GM12878 (cell line): ENCODE measurements at regions of chr18 and their contacts with region 1.

Region 1: DNA sequence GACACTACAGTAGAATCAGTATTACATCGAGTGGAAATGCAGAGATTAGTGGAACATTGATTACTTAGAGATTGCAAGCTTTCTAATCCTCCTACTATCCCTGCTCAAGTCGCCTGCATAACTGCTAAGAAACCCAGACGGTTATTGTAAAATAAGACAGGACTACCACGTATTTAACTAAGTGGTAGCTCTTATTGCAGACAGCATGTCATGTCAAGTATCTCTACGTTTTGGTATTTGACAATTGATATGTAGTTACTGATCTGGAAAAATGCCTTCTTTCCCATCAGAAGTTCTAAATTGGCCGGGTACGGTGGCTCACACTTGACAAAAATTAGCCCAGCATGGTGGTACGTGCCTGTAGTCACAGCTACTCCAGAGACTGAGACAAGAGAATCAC is 404.1 kb downstream of the CBLN2 start:
- DNase-seq: no peak
- ATAC-seq: no peak
- H3K4me3 ChIP-seq: no peak overlapping the region
- H3K27ac ChIP-seq: no peak overlapping the region
- H3K4me1 ChIP-seq: no peaks in the 10 kb centered on the region
- H3K27me3 ChIP-seq: no peaks in the 10 kb centered on the region
- CTCF ChIP-seq: no peak
- EP300 ChIP-seq: no peak
- POLR2A ChIP-seq: no peak
- RAD21 ChIP-seq: no peak

Region 2: DNA sequence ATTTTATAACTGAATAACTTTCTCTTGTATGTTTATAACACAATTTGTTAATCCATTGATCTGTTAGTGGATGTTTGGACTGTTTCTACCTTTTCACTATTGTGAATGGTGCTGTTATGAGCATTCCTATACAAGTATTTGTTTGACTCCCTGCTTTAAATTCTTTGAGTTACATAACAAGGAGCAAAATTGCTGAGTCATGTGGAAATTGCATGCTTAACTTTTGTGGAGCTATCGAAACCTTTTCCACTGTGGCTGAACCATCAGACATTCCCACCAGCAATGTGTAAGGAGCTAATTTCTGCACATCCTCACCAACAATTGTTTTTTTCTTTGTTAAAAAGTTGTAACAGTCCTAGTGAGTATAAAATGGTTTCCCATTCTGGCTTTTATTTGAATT is 11.4 kb before region 1 on chr18:
- CTCF ChIA-PET with region 1: no interaction called
- POLR2A ChIA-PET with region 1: no interaction called
- RAD21 ChIA-PET with region 1: no interaction called
- SMC1A ChIA-PET with region 1: interaction called, 11 read pairs
- in situ Hi-C with region 1: no loop called
- intact Hi-C with region 1: no loop called
- DNase-seq: no peak
- ATAC-seq: no peak
- H3K4me3 ChIP-seq: no peak overlapping the region
- H3K27ac ChIP-seq: no peak overlapping the region
- H3K4me1 ChIP-seq: no peaks in the 10 kb centered on the region
- H3K27me3 ChIP-seq: no peaks in the 10 kb centered on the region
- CTCF ChIP-seq: no peak
- EP300 ChIP-seq: no peak
- POLR2A ChIP-seq: no peak
- RAD21 ChIP-seq: no peak